CD4-positive, alpha-beta memory T cell (primary cell): ENCODE measurements at regions of chr1 and their contacts with region 1.

Region 1: GRCh38 chr1:70354332-70355110 is at the start of gene ANKRD13C:
- DNase-seq: peak; percentile 94 to 97 (median 95)
- H3K4me3 ChIP-seq: peak within 1 kb of the TSS; percentile 15 to 89
- H3K4me3 Mint-ChIP-seq: peak within 1 kb of the TSS; percentile 90 to 99 (median 95)
- H3K27ac ChIP-seq: peak within 1 kb of the TSS; percentile 92
- H3K27ac Mint-ChIP-seq: peak within 1 kb of the TSS; percentile 96 to 100 (median 99)
- H3K4me1 ChIP-seq: peaks cover 45% of the 10 kb centered on the region
- H3K4me1 Mint-ChIP-seq: peaks cover 24 to 53% (median 41%) of the 10 kb centered on the region in 4 donors
- H3K27me3 ChIP-seq: no peaks in the 10 kb centered on the region
- H3K27me3 Mint-ChIP-seq: no peaks in the 10 kb centered on the region
- total RNA-seq, gene ANKRD13C: 29.1 to 34.0 TPM

Region 2: GRCh38 chr1:70410604-70411359 is 56.3 kb after region 1 on chr1 and contains the start of gene CTH:
- CTCF ChIA-PET with region 1: interaction called, 12 read pairs
- POLR2A ChIA-PET with region 1: interaction called, 100 read pairs
- intact Hi-C with region 1: loop called (anchors 1 kb)
- DNase-seq: peak; percentile 91 to 95 (median 93)
- H3K4me3 ChIP-seq: peak within 1 kb of the TSS; percentile 64 to 66
- H3K4me3 Mint-ChIP-seq: peak within 1 kb of the TSS; percentile 90 to 99 (median 97)
- H3K27ac ChIP-seq: peak within 1 kb of the TSS; percentile 77
- H3K27ac Mint-ChIP-seq: peak within 1 kb of the TSS; percentile 94 to 99 (median 96)
- H3K4me1 ChIP-seq: peaks cover 16% of the 10 kb centered on the region
- H3K4me1 Mint-ChIP-seq: peaks cover 13 to 22% (median 18%) of the 10 kb centered on the region in 4 donors
- H3K27me3 ChIP-seq: no peaks in the 10 kb centered on the region
- H3K27me3 Mint-ChIP-seq: peaks cover 0 to 3% of the 10 kb centered on the region in 2 donors
- total RNA-seq, gene CTH: 2.0 to 2.9 TPM